ENCODE measurements at regions of chr9 and their contacts with region 1.

Region 1: GRCh38 chr9:74773886-74774479 is 113.7 kb downstream of the TRPM6 start:
- DNase-seq: no peak
- H3K4me3 ChIP-seq: no peak overlapping the region
- H3K27me3 ChIP-seq: no peaks in the 10 kb centered on the region
- CTCF ChIP-seq: peak; percentile 88

Region 2: GRCh38 chr9:74748966-74749365 is 25.0 kb before region 1 on chr9:
- CTCF ChIA-PET with region 1: no interaction called
- POLR2A ChIA-PET with region 1: no interaction called
- DNase-seq: no peak
- H3K4me3 ChIP-seq: no peak overlapping the region
- H3K27me3 ChIP-seq: no peaks in the 10 kb centered on the region
- CTCF ChIP-seq: no peak

Region 3: GRCh38 chr9:74952281-74953151 is 178.5 kb after region 1 on chr9 and contains the start of gene C9orf40:
- CTCF ChIA-PET with region 1: interaction called, 23 read pairs
- POLR2A ChIA-PET with region 1: no interaction called
- DNase-seq: no peak
- H3K4me3 ChIP-seq: peak within 1 kb of the TSS; percentile 96
- H3K27me3 ChIP-seq: no peaks in the 10 kb centered on the region
- CTCF ChIP-seq: peak; percentile 78
- polyA plus RNA-seq, gene C9orf40: 1.0 and 2.2 TPM in 2 replicates

Region 4: GRCh38 chr9:75010570-75010969 is 236.6 kb after region 1 on chr9:
- CTCF ChIA-PET with region 1: interaction called, 196 read pairs
- POLR2A ChIA-PET with region 1: no interaction called
- DNase-seq: no peak
- H3K4me3 ChIP-seq: no peak overlapping the region
- H3K27me3 ChIP-seq: no peaks in the 10 kb centered on the region
- CTCF ChIP-seq: no peak

Region 5: GRCh38 chr9:75071530-75072124 is 297.6 kb after region 1 on chr9:
- CTCF ChIA-PET with region 1: interaction called, 76 read pairs
- POLR2A ChIA-PET with region 1: no interaction called
- DNase-seq: no peak
- H3K4me3 ChIP-seq: no peak overlapping the region
- H3K27me3 ChIP-seq: no peaks in the 10 kb centered on the region
- CTCF ChIP-seq: no peak